ENCODE measurements at regions of chr16 and their contacts with region 1.

Region 1: GRCh38 chr16:54929090-54930004 is 1.3 kb upstream of the IRX5 start:
- DNase-seq: peak; percentile 98 to 100
- H3K4me3 ChIP-seq: peak overlapping the region; percentile 82 to 94
- H3K27ac ChIP-seq: peak overlapping the region; percentile 91 to 99
- H3K4me1 ChIP-seq: peaks cover 7 to 13% of the 10 kb centered on the region in 2 donors
- H3K27me3 ChIP-seq: no peaks in the 10 kb centered on the region
- CTCF ChIP-seq: peak in 2 of 3 experiments; percentile 17 to 34

Region 2: DNA sequence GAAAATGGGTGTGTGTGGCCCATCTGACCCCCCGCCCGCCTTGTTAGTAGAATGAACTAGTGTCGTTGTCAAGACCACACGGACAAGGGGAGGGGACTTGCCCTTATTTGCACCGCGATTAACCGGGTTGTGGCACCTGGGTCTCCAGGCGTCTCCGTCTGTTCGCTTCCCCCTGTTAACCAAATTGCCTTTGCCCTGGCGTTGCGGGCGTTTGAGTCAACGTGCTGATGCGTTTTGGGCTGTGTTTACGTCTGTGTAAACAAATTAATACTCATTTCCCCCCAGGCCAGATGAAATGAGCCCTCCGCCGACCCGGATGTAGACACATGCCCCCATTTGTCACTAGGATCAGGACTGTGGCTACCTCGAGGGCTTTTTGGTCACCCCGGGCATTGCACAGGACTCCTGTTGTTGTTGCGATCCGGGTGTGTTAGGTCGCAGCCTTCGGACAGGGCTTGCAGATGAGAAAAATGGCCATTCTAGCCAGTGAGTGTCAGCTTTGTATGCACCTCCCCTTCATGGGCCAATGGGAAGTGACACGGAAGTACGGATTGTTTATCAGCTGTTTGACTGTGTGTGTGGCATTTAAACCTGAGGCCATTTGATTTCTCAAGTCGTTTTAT is 1494.2 kb before region 1 on chr16:
- intact Hi-C with region 1: loop called (anchors 10 kb)
- DNase-seq: peak; percentile 41 to 88
- H3K4me3 ChIP-seq: peak overlapping the region; percentile 99
- H3K27ac ChIP-seq: peak overlapping the region; percentile 98
- H3K4me1 ChIP-seq: peaks cover 0 to 13% of the 10 kb centered on the region in 2 donors
- H3K27me3 ChIP-seq: no peaks in the 10 kb centered on the region
- CTCF ChIP-seq: no peak

Region 3: DNA sequence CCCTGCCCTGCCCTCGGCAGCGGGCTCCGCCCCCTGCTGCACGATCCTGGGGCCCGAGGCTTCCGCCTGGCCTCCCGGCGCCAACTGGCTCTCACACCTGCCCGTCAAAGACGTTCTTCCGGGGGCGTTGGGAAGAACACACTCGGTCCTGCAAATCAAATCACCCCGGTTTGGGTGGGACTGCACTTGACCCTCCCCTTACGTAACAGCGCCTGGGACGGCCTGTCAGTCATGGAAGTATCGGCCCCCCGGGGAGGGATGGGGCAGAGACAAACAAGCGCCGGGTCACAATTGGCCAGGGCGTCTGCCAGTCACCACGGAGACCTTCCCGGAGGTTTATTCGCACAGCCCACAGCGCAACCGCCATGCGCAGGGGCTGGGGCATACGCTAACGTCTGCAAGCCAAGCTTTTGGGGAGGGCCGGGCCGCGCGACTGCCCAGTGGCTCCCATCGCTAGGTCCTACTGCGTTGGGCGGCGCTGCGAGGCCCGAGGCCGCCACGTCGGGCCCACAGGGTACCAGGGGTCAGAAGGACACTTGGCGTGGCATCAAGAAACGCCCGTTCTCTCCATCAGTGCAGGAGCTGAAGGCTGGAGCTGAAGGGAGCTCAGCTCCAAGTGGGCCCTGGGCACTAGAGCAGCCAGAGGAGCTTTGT is 1426.0 kb before region 1 on chr16:
- intact Hi-C with region 1: loop called (anchors 2 kb)
- DNase-seq: peak; percentile 100
- H3K4me3 ChIP-seq: peak overlapping the region; percentile 83 to 93
- H3K27ac ChIP-seq: peak overlapping the region; percentile 91 to 97
- H3K4me1 ChIP-seq: peaks cover 10 to 27% of the 10 kb centered on the region in 2 donors
- H3K27me3 ChIP-seq: no peaks in the 10 kb centered on the region
- CTCF ChIP-seq: no peak

Region 4: DNA sequence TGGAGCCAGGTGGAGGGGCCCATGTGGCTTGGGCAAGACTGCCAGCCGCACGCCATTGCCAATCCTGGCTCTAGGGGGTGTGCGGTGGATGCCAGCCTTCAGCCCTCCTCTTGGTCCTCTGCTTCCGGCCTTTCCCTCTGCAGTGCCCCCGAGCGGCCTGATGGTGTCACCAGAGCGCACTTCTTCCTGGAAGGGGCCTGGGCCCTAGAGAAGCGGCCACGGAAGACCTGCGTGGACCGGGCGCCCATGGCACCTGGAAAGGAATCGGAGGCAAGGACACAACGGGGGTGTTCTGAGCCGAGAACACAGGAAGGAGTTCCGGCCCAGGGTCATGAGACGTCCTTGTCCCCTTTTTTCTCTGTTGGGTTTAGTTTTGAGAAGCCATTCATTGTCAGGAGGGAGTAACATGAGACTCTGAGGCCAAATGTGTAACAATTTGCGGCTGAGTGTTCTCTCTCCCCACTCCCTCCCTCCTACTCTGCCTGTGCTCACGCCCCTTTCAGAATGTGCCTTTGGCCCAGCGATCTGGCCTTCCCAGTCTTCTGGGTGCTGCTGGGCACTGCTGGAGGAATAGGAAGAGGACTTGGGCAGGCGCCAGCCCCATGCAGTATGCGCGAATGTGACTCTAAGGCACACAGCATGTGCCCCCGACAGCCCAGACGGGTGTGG is 735.5 kb before region 1 on chr16:
- intact Hi-C with region 1: loop called (anchors 10 kb)
- DNase-seq: peak in 1 of 2 donors; percentile 85
- H3K4me3 ChIP-seq: peak overlapping the region; percentile 25 to 59
- H3K27ac ChIP-seq: peak overlapping the region; percentile 54 to 66
- H3K4me1 ChIP-seq: no peaks in the 10 kb centered on the region
- H3K27me3 ChIP-seq: no peaks in the 10 kb centered on the region
- CTCF ChIP-seq: peak; percentile 41 to 91 (median 80)

Region 5: DNA sequence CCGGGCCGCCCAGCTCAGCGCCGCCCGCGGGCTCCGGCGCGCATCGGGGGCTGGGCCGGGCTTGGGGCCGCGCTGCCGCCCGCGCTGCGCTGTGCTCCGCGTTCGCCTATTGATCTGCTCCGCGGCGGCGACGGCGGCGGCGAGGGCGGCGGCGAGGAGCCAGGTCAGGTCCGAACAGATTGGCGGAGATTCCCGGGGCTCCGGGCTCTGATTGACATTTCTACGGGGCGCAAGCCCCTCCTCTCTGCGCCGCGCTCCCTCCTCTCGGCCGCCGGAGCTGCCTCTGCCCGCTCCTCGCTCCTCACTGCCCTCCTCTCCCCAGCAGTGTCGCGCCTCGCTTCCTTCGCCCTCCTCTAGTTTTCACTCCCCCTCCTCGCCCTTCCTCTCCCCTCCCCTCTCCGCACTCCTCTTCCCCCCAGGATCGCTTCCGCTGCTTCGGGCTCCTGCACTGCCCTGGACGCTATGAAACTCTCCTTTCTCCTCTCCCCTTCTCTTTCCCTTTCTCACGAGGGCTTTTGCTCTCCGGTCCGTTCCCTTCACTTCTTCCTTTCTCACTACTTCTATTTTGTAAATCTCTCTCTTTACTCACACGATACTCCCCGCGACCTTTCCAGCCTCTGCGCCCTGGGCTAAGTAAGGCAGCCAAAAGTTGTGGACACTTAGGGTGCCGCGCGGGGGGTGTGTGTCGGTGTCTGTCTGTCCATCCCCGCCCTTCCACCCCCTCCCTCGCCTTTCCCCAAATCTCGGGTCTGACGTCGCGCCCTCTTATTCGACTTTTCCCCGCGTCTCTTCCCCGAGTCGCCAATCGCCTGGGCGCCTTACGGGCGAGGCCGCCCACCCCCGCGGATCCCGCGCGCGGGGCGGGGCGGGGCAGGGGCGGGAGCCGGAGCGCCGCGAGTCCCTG is 643.0 kb before region 1 on chr16 and contains the start of gene IRX3:
- intact Hi-C with region 1: loop called (anchors 2 kb)
- DNase-seq: peak in 1 of 2 donors; percentile 83
- H3K4me3 ChIP-seq: peak within 1 kb of the TSS; percentile 64 to 73
- H3K27ac ChIP-seq: peak within 1 kb of the TSS; percentile 35 to 59
- H3K4me1 ChIP-seq: peaks cover 16 to 34% of the 10 kb centered on the region in 2 donors
- H3K27me3 ChIP-seq: peaks cover 27% of the 10 kb centered on the region
- CTCF ChIP-seq: no peak
- total RNA-seq, gene IRX3: 0.11 TPM

Region 6: DNA sequence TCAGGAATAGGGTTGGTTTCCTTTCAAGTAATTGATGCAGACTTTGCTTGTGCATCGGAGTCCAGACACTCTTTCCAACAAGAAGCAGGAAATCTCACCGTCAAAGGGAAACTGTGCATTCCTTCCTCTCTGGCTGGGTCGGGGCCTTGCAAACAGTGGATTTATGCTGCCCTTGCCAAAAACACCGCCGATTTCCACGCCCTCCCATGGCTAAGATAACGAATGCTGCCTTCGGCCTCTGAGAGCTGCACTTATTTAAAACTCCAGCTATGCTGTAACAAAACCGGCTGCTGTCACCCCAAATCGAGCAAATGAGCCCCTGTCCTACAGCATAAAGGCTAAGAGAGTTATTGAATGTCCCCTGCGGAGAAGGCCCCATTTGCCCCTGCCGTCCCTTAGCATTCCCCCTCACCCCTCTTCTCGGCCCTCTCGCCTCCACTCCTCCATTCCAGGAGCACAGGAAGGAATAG is 274.2 kb before region 1 on chr16:
- intact Hi-C with region 1: loop called (anchors 2 kb)
- DNase-seq: no peak
- H3K4me3 ChIP-seq: peak overlapping the region; percentile 31 to 42
- H3K27ac ChIP-seq: peak overlapping the region; percentile 64 to 74
- H3K4me1 ChIP-seq: peaks cover 6 to 27% of the 10 kb centered on the region in 2 donors
- H3K27me3 ChIP-seq: no peaks in the 10 kb centered on the region
- CTCF ChIP-seq: no peak

Region 7: DNA sequence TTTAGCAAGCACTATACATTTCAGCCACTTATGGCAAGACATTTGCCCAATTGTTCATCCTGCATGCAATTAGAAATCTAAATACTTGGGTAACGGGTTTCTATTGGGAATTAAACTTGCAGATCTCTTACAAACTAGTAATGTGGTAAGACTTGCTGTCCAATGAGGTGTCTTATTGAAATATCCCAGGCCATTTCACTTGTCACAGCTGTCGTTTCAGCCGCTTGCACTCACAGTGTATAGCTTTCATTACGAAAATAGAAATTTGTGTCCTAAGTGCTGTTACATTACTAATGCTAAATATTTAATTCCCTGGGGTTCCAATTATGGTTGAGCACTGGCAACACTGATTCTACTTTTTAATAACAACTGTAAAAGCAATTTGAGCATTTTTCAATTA is 39.0 kb before region 1 on chr16:
- intact Hi-C with region 1: no loop called
- DNase-seq: no peak
- H3K4me3 ChIP-seq: no peak overlapping the region
- H3K27ac ChIP-seq: no peak overlapping the region
- H3K4me1 ChIP-seq: no peaks in the 10 kb centered on the region
- H3K27me3 ChIP-seq: no peaks in the 10 kb centered on the region
- CTCF ChIP-seq: no peak

Region 8: DNA sequence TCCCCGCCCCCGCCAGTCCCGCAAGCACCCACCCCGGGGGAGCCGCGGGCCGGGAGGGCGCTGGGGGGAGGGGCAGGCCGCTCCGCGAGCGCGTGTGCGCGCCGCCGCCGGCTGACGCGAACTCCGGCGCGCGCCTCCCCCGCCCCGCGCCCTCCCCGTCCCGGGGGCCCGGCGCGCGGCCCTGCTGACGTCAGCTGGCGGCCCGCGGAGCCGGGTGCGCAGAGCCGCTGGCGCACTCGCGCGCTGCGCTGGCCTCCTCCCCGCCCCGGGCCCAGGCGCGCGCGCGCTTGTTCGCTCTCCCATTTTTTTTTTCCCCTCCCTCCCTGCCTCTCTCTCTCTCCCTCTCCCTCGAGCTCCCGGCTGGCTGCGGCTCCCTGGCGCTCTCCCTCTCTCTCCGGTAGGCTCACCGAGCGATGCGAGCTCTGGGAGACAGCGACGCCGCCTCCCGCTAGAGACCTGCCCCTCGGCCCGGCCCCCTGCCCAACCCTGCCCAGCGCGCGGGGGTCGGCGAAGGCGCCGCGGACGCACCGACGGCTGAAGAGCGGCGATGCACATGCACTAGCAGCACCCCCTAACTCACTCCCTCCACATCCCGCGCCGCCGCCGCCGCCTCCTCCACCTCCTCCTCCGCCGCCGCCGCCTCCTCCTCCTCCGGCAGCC is 1261.9 kb after region 1 on chr16 and contains the start of gene GNAO1:
- intact Hi-C with region 1: loop called (anchors 10 kb)
- DNase-seq: peak in 1 of 2 donors; percentile 79
- H3K4me3 ChIP-seq: peak within 1 kb of the TSS; percentile 93 to 95
- H3K27ac ChIP-seq: peak within 1 kb of the TSS; percentile 92
- H3K4me1 ChIP-seq: peaks cover 0 to 19% of the 10 kb centered on the region in 2 donors
- H3K27me3 ChIP-seq: no peaks in the 10 kb centered on the region
- CTCF ChIP-seq: no peak
- total RNA-seq, gene GNAO1: 0.53 TPM

Measured in ascending aorta (tissue), 2 donors.